Ascending aorta (tissue), 2 donors: ENCODE measurements at regions of chr10 and their contacts with region 1.

Region 1: GRCh38 chr10:130110246-130111112 is at the start of gene C10orf143:
- DNase-seq: peak; percentile 95 to 99
- H3K4me3 ChIP-seq: peak within 1 kb of the TSS; percentile 64 to 85
- H3K27ac ChIP-seq: peak within 1 kb of the TSS; percentile 80 to 92
- H3K4me1 ChIP-seq: peaks cover 6 to 16% of the 10 kb centered on the region in 2 donors
- H3K27me3 ChIP-seq: no peaks in the 10 kb centered on the region
- CTCF ChIP-seq: no peak
- total RNA-seq, gene C10orf143: 0.11 TPM

Region 2: DNA sequence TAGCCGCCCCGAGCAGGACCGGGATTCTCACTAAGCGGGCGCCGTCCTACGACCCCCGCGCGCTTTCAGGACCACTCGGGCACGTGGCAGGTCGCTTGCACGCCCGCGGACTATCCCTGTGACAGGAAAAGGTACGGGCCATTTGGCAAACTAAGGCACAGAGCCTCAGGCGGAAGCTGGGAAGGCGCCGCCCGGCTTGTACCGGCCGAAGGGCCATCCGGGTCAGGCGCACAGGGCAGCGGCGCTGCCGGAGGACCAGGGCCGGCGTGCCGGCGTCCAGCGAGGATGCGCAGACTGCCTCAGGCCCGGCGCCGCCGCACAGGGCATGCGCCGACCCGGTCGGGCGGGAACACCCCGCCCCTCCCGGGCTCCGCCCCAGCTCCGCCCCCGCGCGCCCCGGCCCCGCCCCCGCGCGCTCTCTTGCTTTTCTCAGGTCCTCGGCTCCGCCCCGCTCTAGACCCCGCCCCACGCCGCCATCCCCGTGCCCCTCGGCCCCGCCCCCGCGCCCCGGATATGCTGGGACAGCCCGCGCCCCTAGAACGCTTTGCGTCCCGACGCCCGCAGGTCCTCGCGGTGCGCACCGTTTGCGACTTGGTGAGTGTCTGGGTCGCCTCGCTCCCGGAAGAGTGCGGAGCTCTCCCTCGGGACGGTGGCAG is 643.6 kb before region 1 on chr10 and contains the start of gene MGMT:
- intact Hi-C with region 1: loop called (anchors 1 kb)
- DNase-seq: peak; percentile 79 to 97
- H3K4me3 ChIP-seq: peak within 1 kb of the TSS; percentile 59 to 74
- H3K27ac ChIP-seq: peak within 1 kb of the TSS; percentile 78 to 88
- H3K4me1 ChIP-seq: peaks cover 5 to 9% of the 10 kb centered on the region in 2 donors
- H3K27me3 ChIP-seq: no peaks in the 10 kb centered on the region
- CTCF ChIP-seq: no peak
- total RNA-seq, gene MGMT: 7.0 TPM

Region 3: GRCh38 chr10:129963641-129964501 is 146.6 kb before region 1 on chr10 and contains the start of gene EBF3:
- intact Hi-C with region 1: loop called (anchors 2 kb)
- DNase-seq: peak in 1 of 2 donors; percentile 84
- H3K4me3 ChIP-seq: peak within 1 kb of the TSS; percentile 70 to 84
- H3K27ac ChIP-seq: peak within 1 kb of the TSS; percentile 48 to 54
- H3K4me1 ChIP-seq: peaks cover 10 to 16% of the 10 kb centered on the region in 2 donors
- H3K27me3 ChIP-seq: peaks cover 60% of the 10 kb centered on the region
- CTCF ChIP-seq: no peak
- total RNA-seq, gene EBF3: 20.2 TPM

Region 4: GRCh38 chr10:130136226-130137089 is 26.0 kb after region 1 on chr10 and contains the start of gene GLRX3:
- intact Hi-C with region 1: loop called (anchors 1 kb)
- DNase-seq: peak; percentile 42 to 93
- H3K4me3 ChIP-seq: peak within 1 kb of the TSS; percentile 95 to 98
- H3K27ac ChIP-seq: peak within 1 kb of the TSS; percentile 77 to 82
- H3K4me1 ChIP-seq: peaks cover 10 to 25% of the 10 kb centered on the region in 2 donors
- H3K27me3 ChIP-seq: no peaks in the 10 kb centered on the region
- CTCF ChIP-seq: no peak
- total RNA-seq, gene GLRX3: 30.7 TPM

Region 5: DNA sequence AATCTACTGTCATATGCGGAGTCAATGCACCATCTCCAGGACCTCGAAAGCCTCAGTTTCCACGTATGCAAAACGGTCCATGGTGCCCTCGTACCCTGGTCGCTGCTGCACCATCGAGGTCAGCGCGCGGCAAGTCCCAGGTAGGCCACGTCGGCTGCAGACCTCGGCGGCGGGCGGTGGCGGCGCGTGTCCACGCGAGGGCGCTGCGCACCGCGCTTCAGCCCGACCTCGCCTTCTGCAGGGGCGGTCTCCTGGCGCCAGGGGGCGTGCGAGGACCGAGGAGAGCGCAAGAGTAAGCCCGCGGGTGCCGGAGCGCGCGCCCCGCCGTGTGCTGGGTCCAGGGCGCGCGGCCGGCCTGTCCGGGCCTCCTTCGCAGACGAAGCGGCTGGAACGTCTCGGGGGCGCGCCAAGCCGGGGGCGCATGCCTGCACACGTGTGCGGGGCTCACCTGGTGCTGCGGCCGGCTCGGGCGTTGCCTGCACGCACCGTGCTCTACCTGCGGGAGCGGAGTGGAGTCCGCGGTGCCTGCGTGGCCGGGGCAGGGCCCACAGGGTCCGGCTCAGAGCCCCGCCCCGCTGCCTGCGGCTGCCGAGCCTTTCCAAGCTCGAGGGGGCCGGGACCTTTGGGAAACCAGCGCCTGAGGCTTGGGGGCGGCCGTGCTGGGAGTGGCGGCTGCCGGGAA is 79.7 kb after region 1 on chr10:
- intact Hi-C with region 1: loop called (anchors 2 kb)
- DNase-seq: peak in 1 of 2 donors; percentile 91
- H3K4me3 ChIP-seq: peak overlapping the region; percentile 58 to 78
- H3K27ac ChIP-seq: no peak overlapping the region
- H3K4me1 ChIP-seq: peaks cover 4 to 7% of the 10 kb centered on the region in 2 donors
- H3K27me3 ChIP-seq: no peaks in the 10 kb centered on the region
- CTCF ChIP-seq: peak; percentile 98 to 100 (median 99)

Region 6: GRCh38 chr10:131900350-131901146 is 1790.1 kb after region 1 on chr10 and contains the start of gene PPP2R2D:
- intact Hi-C with region 1: loop called (anchors 2 kb)
- DNase-seq: peak; percentile 66 to 95
- H3K4me3 ChIP-seq: peak within 1 kb of the TSS; percentile 85 to 98
- H3K27ac ChIP-seq: peak within 1 kb of the TSS; percentile 84 to 95
- H3K4me1 ChIP-seq: peaks cover 0 to 18% of the 10 kb centered on the region in 2 donors
- H3K27me3 ChIP-seq: no peaks in the 10 kb centered on the region
- CTCF ChIP-seq: no peak
- total RNA-seq, gene PPP2R2D: 11.8 TPM